ENCODE measurements at regions of chr6 and their contacts with region 1.

Region 1: DNA sequence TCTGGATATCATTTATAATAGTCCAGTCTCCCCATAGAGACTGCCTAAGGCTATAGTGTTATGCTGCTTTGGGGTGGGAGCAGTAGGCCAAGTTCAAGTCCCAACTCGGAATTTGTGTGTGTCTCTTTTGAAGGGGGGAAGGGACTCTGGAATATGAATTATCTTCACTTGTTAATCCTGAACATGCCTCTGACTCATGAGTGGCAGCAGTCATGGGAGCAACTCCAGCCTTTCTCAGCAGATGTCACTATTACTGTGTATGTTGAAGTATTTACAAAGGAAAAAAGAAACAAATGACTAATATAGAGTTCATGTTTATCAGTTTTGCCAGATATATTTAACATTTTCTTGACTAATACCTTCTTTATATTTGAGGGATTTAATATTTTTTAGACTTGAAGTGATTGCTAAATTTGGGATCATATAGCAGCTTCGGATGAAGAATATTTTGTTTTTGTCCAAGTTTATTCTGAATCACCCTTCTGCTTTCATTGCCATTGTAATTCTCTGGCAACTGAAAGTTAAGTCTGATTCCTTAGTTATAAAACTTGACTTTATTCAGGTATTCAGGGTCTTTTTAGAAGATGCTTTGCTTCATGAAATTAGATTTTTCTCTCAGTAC is 23.4 kb downstream of the FAM217A start:
- DNase-seq: peak; percentile 47 to 70
- ATAC-seq: peak; percentile 87 to 91
- H3K4me3 ChIP-seq: no peak overlapping the region
- H3K27ac ChIP-seq: peak overlapping the region; percentile 4 to 40; a peak in 3 of 6 replicates
- H3K4me1 ChIP-seq: peaks cover 57% of the 10 kb centered on the region
- CTCF ChIP-seq: peak; percentile 57
- EP300 ChIP-seq: no peak
- POLR2A ChIP-seq: no peak
- RAD21 ChIP-seq: peak; percentile 63 to 72

Region 2: GRCh38 chr6:4021133-4021853 is 34.2 kb before region 1 on chr6:
- CTCF ChIA-PET with region 1: interaction called, 6 read pairs
- POLR2A ChIA-PET with region 1: interaction called, 10 read pairs
- DNase-seq: peak; percentile 60 to 96
- ATAC-seq: peak; percentile 86 to 88
- H3K4me3 ChIP-seq: peak overlapping the region; percentile 73
- H3K27ac ChIP-seq: peak overlapping the region; percentile 97 to 99
- H3K4me1 ChIP-seq: peaks cover 34% of the 10 kb centered on the region
- CTCF ChIP-seq: no peak; the same call in 2 of the 3 replicates
- EP300 ChIP-seq: no peak
- POLR2A ChIP-seq: peak; percentile 55
- RAD21 ChIP-seq: no peak

Region 3: GRCh38 chr6:4039348-4039747 is 16.2 kb before region 1 on chr6:
- CTCF ChIA-PET with region 1: interaction called, 11 read pairs
- POLR2A ChIA-PET with region 1: no interaction called
- DNase-seq: no peak
- ATAC-seq: no peak
- H3K4me3 ChIP-seq: no peak overlapping the region
- H3K27ac ChIP-seq: no peak overlapping the region
- H3K4me1 ChIP-seq: no peaks in the 10 kb centered on the region
- CTCF ChIP-seq: no peak
- EP300 ChIP-seq: no peak
- POLR2A ChIP-seq: no peak
- RAD21 ChIP-seq: no peak

Region 4: GRCh38 chr6:4125936-4126864 is 70.7 kb after region 1 on chr6:
- CTCF ChIA-PET with region 1: interaction called, 11 read pairs
- POLR2A ChIA-PET with region 1: no interaction called
- DNase-seq: peak; percentile 61 to 68
- ATAC-seq: peak; percentile 98
- H3K4me3 ChIP-seq: no peak overlapping the region
- H3K27ac ChIP-seq: peak overlapping the region; percentile 63 to 80; a peak in 5 of 6 replicates
- H3K4me1 ChIP-seq: peaks cover 24% of the 10 kb centered on the region
- CTCF ChIP-seq: 0 out of 3 replicates have a peak, but pooled peaks have one; percentile 21
- EP300 ChIP-seq: no peak
- POLR2A ChIP-seq: no peak
- RAD21 ChIP-seq: 0 out of 5 replicates have a peak, but pooled peaks of 1 of the 2 experiments have one; percentile 22

Region 5: DNA sequence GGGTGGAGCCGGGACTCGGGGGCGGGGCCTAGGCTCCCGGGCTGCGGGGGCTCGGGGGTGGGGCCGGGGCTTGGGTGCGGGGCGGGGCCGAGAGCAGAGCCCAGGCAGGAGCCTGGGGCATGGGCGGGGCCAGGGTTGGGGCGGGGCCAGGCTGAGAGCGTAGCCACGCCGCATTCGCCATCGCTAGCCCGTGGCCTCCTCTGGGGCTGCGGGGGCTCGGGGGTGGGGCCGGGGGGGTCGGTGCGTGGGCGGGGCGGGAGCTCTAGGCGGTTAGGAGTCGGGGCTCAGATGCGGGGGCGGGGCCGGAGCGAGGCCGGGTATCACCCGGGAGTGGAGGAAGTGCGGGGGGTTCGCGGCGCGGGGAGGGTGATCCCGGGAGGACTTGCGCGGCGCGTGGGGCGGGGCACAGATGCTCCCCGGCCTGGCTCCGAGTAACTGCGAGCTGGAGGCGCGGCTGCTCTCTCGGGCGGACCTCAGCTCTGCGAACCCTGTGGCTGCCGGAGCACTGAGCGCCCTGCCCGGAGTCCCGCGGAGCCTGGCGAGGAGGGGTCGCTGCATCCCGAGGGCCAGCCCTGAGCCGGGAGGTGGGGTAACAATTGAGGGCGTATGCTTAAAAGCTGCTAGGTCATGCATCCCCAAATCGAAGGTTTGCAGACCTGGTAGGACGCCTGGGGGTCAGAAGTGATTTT is 80.3 kb after region 1 on chr6:
- CTCF ChIA-PET with region 1: interaction called, 15 read pairs
- POLR2A ChIA-PET with region 1: interaction called, 11 read pairs
- DNase-seq: peak; percentile 74 to 90
- ATAC-seq: peak; percentile 81 to 84
- H3K4me3 ChIP-seq: peak overlapping the region; percentile 65
- H3K27ac ChIP-seq: peak overlapping the region; percentile 87 to 92
- H3K4me1 ChIP-seq: peaks cover 8% of the 10 kb centered on the region; the same call in 2 of the 3 replicates
- CTCF ChIP-seq: no peak
- EP300 ChIP-seq: no peak
- POLR2A ChIP-seq: peak; percentile 81
- RAD21 ChIP-seq: no peak

Region 6: GRCh38 chr6:4155848-4156466 is 100.4 kb after region 1 on chr6:
- CTCF ChIA-PET with region 1: interaction called, 19 read pairs
- POLR2A ChIA-PET with region 1: no interaction called
- DNase-seq: peak; percentile 63 to 76
- ATAC-seq: peak; percentile 95 to 96
- H3K4me3 ChIP-seq: no peak overlapping the region
- H3K27ac ChIP-seq: peak overlapping the region; percentile 37 to 50; a peak in 2 of 6 replicates
- H3K4me1 ChIP-seq: peaks cover 5% of the 10 kb centered on the region; the same call in 2 of the 3 replicates
- CTCF ChIP-seq: peak; percentile 74
- EP300 ChIP-seq: no peak
- POLR2A ChIP-seq: no peak
- RAD21 ChIP-seq: peak; percentile 82 to 83

Measured in A549 (cell line).